Endothelial cell of umbilical vein (primary cell): ENCODE measurements at regions of chr4 and their contacts with region 1.

Region 1: GRCh38 chr4:158624889-158625478 is 46.7 kb downstream of the C4orf46 start:
- DNase-seq: peak; percentile 63
- H3K4me3 ChIP-seq: no peak overlapping the region
- H3K27ac ChIP-seq: no peak overlapping the region
- H3K4me1 ChIP-seq: no peaks in the 10 kb centered on the region
- H3K27me3 ChIP-seq: no peaks in the 10 kb centered on the region
- CTCF ChIP-seq: peak; percentile 42 to 50
- POLR2A ChIP-seq: no peak

Region 2: GRCh38 chr4:158193171-158193749 is 431.7 kb before region 1 on chr4:
- CTCF ChIA-PET with region 1: no interaction called
- POLR2A ChIA-PET with region 1: no interaction called
- dilution Hi-C with region 1: no loop called
- intact Hi-C with region 1: loop called (anchors 5 kb)
- DNase-seq: peak; percentile 58
- H3K4me3 ChIP-seq: no peak overlapping the region
- H3K27ac ChIP-seq: no peak overlapping the region
- H3K4me1 ChIP-seq: no peaks in the 10 kb centered on the region
- H3K27me3 ChIP-seq: no peaks in the 10 kb centered on the region
- CTCF ChIP-seq: peak; percentile 38 to 40
- POLR2A ChIP-seq: no peak

Region 3: GRCh38 chr4:158253350-158253980 is 371.5 kb before region 1 on chr4:
- CTCF ChIA-PET with region 1: interaction called, 74 read pairs
- POLR2A ChIA-PET with region 1: no interaction called
- dilution Hi-C with region 1: no loop called
- intact Hi-C with region 1: no loop called
- DNase-seq: peak; percentile 71
- H3K4me3 ChIP-seq: no peak overlapping the region
- H3K27ac ChIP-seq: no peak overlapping the region
- H3K4me1 ChIP-seq: no peaks in the 10 kb centered on the region
- H3K27me3 ChIP-seq: no peaks in the 10 kb centered on the region
- CTCF ChIP-seq: peak; percentile 60
- POLR2A ChIP-seq: no peak

Region 4: GRCh38 chr4:158259955-158260575 is 364.9 kb before region 1 on chr4:
- CTCF ChIA-PET with region 1: interaction called, 74 read pairs
- POLR2A ChIA-PET with region 1: no interaction called
- dilution Hi-C with region 1: no loop called
- intact Hi-C with region 1: loop called (anchors 1 kb)
- DNase-seq: peak; percentile 53
- H3K4me3 ChIP-seq: no peak overlapping the region
- H3K27ac ChIP-seq: no peak overlapping the region
- H3K4me1 ChIP-seq: no peaks in the 10 kb centered on the region
- H3K27me3 ChIP-seq: no peaks in the 10 kb centered on the region
- CTCF ChIP-seq: peak in 1 of 2 donors; percentile 7
- POLR2A ChIP-seq: no peak

Region 5: DNA sequence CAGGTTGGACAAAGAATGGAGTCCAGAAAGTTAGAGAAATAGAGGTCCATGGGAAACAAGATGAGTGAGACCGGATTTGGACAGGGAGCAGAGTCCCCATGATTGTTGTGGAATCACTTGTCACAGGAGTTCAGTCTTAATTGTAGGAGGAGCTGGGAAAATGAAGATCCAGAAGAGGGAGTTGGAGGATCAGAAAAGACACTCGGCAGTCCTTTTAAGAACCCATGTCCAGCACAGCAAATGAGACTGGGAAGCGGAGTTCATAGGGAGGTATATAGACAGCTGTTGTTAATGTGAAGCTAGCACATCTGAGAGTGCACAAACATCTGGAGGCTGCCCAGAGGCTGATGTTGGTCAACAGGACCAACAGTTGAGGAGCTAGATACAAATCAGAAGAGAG is 214.7 kb before region 1 on chr4:
- CTCF ChIA-PET with region 1: interaction called, 6 read pairs
- POLR2A ChIA-PET with region 1: no interaction called
- dilution Hi-C with region 1: no loop called
- intact Hi-C with region 1: loop called (anchors 1 kb)
- DNase-seq: peak; percentile 23
- H3K4me3 ChIP-seq: no peak overlapping the region
- H3K27ac ChIP-seq: no peak overlapping the region
- H3K4me1 ChIP-seq: no peaks in the 10 kb centered on the region
- H3K27me3 ChIP-seq: peaks cover 0 to 5% of the 10 kb centered on the region in 2 experiments
- CTCF ChIP-seq: no peak
- POLR2A ChIP-seq: no peak

Region 6: DNA sequence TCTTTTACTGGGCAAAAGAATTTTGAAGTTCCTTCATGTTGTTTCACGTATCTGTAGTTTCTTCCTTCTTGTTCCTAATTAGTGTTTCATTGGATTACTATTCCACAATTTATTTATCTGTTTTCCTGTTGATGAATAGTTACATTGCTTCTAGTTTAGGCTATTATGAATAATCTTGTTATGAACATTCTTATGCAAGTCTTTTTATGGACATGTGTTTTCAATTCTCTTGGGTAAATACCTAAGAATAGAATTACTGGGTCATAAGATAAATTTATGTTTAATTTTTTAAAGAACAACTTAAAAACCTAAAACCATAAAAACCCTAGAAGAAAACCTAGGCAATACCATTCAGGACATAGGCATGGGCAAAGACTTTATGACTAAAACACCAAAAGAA is 174.2 kb before region 1 on chr4:
- CTCF ChIA-PET with region 1: no interaction called
- POLR2A ChIA-PET with region 1: no interaction called
- dilution Hi-C with region 1: no loop called
- intact Hi-C with region 1: loop called (anchors 1 kb)
- DNase-seq: no peak
- H3K4me3 ChIP-seq: no peak overlapping the region
- H3K27ac ChIP-seq: no peak overlapping the region
- H3K4me1 ChIP-seq: no peaks in the 10 kb centered on the region
- H3K27me3 ChIP-seq: no peaks in the 10 kb centered on the region
- CTCF ChIP-seq: no peak
- POLR2A ChIP-seq: no peak

Region 7: GRCh38 chr4:158496030-158496741 is 128.8 kb before region 1 on chr4:
- CTCF ChIA-PET with region 1: interaction called, 50 read pairs
- POLR2A ChIA-PET with region 1: no interaction called
- dilution Hi-C with region 1: no loop called
- intact Hi-C with region 1: loop called (anchors 1 kb)
- DNase-seq: peak; percentile 57
- H3K4me3 ChIP-seq: no peak overlapping the region
- H3K27ac ChIP-seq: no peak overlapping the region
- H3K4me1 ChIP-seq: no peaks in the 10 kb centered on the region
- H3K27me3 ChIP-seq: no peaks in the 10 kb centered on the region
- CTCF ChIP-seq: peak; percentile 58 to 79
- POLR2A ChIP-seq: no peak